ENCODE measurements at regions of chr9 and their contacts with region 1.

Region 1: DNA sequence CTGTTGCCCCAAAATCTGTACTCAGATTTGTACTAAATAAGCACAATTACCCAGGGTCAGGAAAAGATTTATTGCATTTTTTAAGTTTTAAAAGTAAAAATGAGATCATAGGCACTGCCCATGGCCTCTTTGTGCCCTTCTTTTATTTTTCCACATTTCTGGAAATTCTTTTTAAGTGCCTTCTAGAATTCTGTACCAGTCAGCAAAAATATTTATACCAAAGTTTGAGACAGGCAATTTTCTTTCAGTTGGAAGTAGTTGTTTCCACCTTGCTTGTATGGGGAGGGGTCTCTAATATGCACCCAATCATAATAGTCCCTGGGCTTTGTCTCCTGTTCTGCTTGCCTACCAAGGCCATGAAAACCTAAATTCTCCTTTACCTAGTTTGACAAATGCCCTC is 5.6 kb upstream of the RNF20 start:
- DNase-seq: no peak
- H3K4me3 ChIP-seq: no peak overlapping the region
- H3K27ac ChIP-seq: no peak overlapping the region
- H3K4me1 ChIP-seq: peaks cover 0 to 4% (median 0%) of the 10 kb centered on the region in 4 donors
- H3K27me3 ChIP-seq: peaks cover 0 to 5% (median 0%) of the 10 kb centered on the region in 3 donors
- CTCF ChIP-seq: no peak
- EP300 ChIP-seq: no peak
- POLR2A ChIP-seq: no peak

Region 2: GRCh38 chr9:101458955-101459631 is 68.9 kb before region 1 on chr9:
- intact Hi-C with region 1: loop called (anchors 2 kb)
- DNase-seq: peak in 1 of 2 donors; percentile 84
- H3K4me3 ChIP-seq: no peak overlapping the region
- H3K27ac ChIP-seq: no peak overlapping the region
- H3K4me1 ChIP-seq: peaks cover 0 to 17% (median 0%) of the 10 kb centered on the region in 4 donors
- H3K27me3 ChIP-seq: peaks cover 0 to 5% (median 0%) of the 10 kb centered on the region in 3 donors
- CTCF ChIP-seq: peak in 4 of 7 experiments; percentile 57 to 76 (median 64)
- EP300 ChIP-seq: no peak
- POLR2A ChIP-seq: no peak